Spleen (tissue), 13 donors: ENCODE measurements at regions of chr16 and their contacts with region 1.

Region 1: GRCh38 chr16:56608043-56608875 is at the start of gene MT2A:
- DNase-seq: peak; percentile 99
- H3K4me3 ChIP-seq: peak within 1 kb of the TSS; percentile 37 to 75 (median 61)
- H3K27ac ChIP-seq: peak within 1 kb of the TSS; percentile 78 to 96 (median 89)
- H3K4me1 ChIP-seq: peaks cover 24 to 72% (median 47%) of the 10 kb centered on the region in 6 donors
- H3K27me3 ChIP-seq: no peaks in the 10 kb centered on the region
- CTCF ChIP-seq: peak in 1 of 11 experiments; percentile 13
- POLR2A ChIP-seq: peak in 1 of 3 donors; percentile 84
- total RNA-seq, gene MT2A: 25.3 to 96.9 (median 43.8) TPM

Region 2: DNA sequence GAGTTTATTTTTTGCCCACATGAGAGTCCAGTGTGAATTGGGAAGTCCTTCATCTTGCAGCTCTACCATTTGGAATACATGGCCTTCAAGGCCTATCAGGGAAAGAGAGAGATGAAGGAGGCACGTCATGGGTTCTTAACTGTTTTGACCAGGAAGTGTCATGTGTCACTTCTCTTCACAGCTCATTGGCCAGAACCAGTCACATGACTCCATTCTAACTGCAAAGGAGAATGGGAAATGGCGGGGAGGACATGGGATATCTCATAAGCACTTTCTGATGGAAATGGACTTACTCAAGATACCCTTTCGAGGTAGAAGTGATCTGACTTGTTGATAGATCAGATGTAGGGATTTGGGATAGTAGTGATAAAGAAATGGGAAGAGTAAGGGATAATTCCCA is 675.2 kb before region 1 on chr16:
- intact Hi-C with region 1: no loop called
- DNase-seq: no peak
- H3K4me3 ChIP-seq: no peak overlapping the region
- H3K27ac ChIP-seq: no peak overlapping the region
- H3K4me1 ChIP-seq: no peaks in the 10 kb centered on the region
- H3K27me3 ChIP-seq: peaks cover 0 to 14% (median 0%) of the 10 kb centered on the region in 7 donors
- CTCF ChIP-seq: no peak
- POLR2A ChIP-seq: no peak

Region 3: GRCh38 chr16:56519459-56520250 is 88.6 kb before region 1 on chr16 and contains the start of gene BBS2:
- intact Hi-C with region 1: loop called (anchors 10 kb)
- DNase-seq: peak; percentile 97
- H3K4me3 ChIP-seq: peak within 1 kb of the TSS; percentile 64 to 100 (median 94)
- H3K27ac ChIP-seq: peak within 1 kb of the TSS; percentile 83 to 95 (median 88)
- H3K4me1 ChIP-seq: peaks cover 13 to 58% (median 37%) of the 10 kb centered on the region in 6 donors
- H3K27me3 ChIP-seq: no peaks in the 10 kb centered on the region
- CTCF ChIP-seq: peak in 6 of 11 experiments; percentile 16 to 43 (median 20)
- POLR2A ChIP-seq: peak in 1 of 3 donors; percentile 65
- total RNA-seq, gene BBS2: 29.1 to 70.3 (median 52.8) TPM

Region 4: DNA sequence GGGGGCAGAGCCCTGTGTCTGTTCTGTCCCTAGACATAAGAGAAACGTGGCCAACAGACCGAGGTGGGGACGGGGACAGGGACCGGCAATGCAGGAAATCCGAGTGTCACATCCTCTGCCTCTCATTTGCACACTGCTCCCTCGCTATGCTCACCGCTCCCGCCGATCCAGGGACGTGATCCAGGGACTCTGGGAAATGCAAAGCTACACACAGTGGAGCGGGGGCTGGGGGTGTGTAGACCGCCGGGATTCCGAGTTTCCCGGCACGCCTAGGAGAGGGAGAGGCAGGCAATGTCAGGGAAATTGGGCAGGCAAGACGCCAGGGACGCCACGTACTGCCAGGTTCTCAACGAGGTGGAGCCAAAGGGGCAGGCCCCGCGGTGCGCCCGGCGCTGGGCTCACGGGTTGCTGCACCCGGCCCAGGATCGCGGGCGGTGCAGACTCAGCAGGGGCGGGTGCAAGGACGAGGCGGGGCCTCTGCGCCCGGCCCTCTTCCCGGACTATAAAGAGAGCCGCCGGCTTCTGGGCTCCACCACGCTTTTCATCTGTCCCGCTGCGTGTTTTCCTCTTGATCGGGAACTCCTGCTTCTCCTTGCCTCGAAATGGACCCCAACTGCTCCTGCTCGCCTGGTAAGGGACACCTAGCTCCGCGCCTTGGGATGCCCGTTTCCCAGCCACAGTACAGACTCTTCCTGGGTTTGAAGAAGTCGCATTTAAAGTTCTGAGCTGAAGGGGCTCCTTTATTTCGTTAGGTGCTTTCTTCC is 73.9 kb after region 1 on chr16 and contains the start of gene MT1X:
- intact Hi-C with region 1: loop called (anchors 10 kb)
- DNase-seq: peak; percentile 98
- H3K4me3 ChIP-seq: peak within 1 kb of the TSS; percentile 22 to 73 (median 48)
- H3K27ac ChIP-seq: peak within 1 kb of the TSS; percentile 54 to 86 (median 80)
- H3K4me1 ChIP-seq: peaks cover 0 to 30% (median 23%) of the 10 kb centered on the region in 6 donors
- H3K27me3 ChIP-seq: peaks cover 0 to 7% (median 0%) of the 10 kb centered on the region in 7 donors
- CTCF ChIP-seq: no peak
- POLR2A ChIP-seq: peak in 1 of 3 donors; percentile 84
- total RNA-seq, gene MT1X: 13.0 to 28.7 (median 19.4) TPM